GM10248 (cell line): ENCODE measurements at regions of chr3 and their contacts with region 1.

Region 1: DNA sequence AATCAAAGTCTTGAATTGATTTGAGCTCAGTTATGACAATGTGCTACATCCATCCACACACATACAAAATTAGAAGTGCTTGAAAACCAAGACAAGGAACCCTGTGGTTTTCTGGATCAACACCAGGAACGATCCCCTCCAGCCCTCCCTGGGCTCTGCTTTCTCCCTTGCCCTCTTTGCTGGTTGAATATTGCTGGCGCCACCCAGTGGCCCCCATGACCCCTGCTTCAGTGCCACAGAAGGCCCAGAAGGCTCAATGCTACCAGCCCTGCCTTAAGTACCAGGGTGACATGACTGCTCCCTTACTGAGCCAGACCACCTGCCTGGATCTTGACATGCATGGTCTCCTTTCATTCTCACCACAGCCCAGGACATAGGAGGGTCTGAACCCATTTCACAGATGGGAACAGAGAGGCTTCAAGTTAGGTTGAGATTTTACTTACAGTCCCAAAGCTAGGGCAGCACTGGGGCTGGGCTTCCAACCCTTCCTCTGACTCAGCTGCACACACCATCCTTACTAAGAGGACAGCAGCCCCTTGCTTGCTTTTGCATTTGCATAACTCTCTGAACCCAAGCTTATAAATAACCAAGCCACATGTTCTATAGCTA is 15.0 kb downstream of the IL12A start:
- DNase-seq: peak; percentile 60
- CTCF ChIP-seq: peak; percentile 84

Region 2: DNA sequence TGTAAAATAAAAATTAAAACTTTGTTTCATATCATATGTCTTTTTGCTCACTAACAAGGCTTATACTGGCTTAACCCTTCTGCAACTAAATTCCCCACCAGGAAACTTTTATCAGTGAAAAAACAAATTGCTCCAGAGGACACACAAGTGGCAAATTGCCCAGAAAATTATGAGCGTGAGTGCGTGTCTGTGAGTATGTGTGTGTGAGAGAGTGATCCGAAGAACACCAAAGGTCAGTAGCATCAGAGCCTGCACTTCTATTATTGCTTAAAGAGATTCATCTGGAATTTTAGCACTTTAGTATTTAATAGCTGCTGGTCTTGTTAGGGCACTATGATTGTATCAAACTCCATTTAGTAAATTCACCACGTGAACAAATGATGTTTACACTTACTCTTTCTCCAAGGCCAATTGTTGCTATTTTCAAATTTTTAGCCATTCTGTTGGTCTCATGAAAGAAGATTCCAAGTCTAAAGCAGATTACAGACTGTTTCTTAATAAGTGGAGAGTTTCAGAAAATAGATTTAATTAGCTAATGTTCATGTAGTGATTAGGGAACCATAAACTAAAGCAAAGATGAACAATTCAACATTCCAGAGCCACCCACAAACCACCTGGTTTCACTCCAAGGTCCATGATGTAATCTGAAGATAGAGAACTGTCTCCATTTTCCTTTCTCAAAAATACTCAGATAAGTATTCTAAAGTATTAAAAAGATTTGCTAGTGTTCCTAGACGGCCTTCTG is 106.1 kb before region 1 on chr3:
- CTCF ChIA-PET with region 1: interaction called, 394 read pairs
- POLR2A ChIA-PET with region 1: no interaction called
- DNase-seq: no peak
- CTCF ChIP-seq: no peak

Region 3: GRCh38 chr3:159929435-159930141 is 74.0 kb before region 1 on chr3:
- CTCF ChIA-PET with region 1: interaction called, 32 read pairs
- POLR2A ChIA-PET with region 1: no interaction called
- DNase-seq: peak; percentile 55
- CTCF ChIP-seq: peak; percentile 46

Region 4: GRCh38 chr3:160016972-160017371 is 13.3 kb after region 1 on chr3:
- CTCF ChIA-PET with region 1: interaction called, 26 read pairs
- POLR2A ChIA-PET with region 1: no interaction called
- DNase-seq: no peak
- CTCF ChIP-seq: no peak